ENCODE measurements at regions of chr17 and their contacts with region 1.

Region 1: GRCh38 chr17:50026901-50027630 is 28.8 kb upstream of the ITGA3 start:
- DNase-seq: peak; percentile 93
- H3K4me3 Mint-ChIP-seq: peak overlapping the region; percentile 68
- H3K27ac Mint-ChIP-seq: no peak overlapping the region
- H3K4me1 Mint-ChIP-seq: peaks cover 7% of the 10 kb centered on the region
- H3K27me3 Mint-ChIP-seq: peaks cover 15% of the 10 kb centered on the region

Region 2: GRCh38 chr17:49890181-49890821 is 136.8 kb before region 1 on chr17:
- intact Hi-C with region 1: no loop called
- DNase-seq: no peak
- H3K4me3 Mint-ChIP-seq: no peak overlapping the region
- H3K27ac Mint-ChIP-seq: no peak overlapping the region
- H3K4me1 Mint-ChIP-seq: no peaks in the 10 kb centered on the region
- H3K27me3 Mint-ChIP-seq: peaks cover 59% of the 10 kb centered on the region

Region 3: DNA sequence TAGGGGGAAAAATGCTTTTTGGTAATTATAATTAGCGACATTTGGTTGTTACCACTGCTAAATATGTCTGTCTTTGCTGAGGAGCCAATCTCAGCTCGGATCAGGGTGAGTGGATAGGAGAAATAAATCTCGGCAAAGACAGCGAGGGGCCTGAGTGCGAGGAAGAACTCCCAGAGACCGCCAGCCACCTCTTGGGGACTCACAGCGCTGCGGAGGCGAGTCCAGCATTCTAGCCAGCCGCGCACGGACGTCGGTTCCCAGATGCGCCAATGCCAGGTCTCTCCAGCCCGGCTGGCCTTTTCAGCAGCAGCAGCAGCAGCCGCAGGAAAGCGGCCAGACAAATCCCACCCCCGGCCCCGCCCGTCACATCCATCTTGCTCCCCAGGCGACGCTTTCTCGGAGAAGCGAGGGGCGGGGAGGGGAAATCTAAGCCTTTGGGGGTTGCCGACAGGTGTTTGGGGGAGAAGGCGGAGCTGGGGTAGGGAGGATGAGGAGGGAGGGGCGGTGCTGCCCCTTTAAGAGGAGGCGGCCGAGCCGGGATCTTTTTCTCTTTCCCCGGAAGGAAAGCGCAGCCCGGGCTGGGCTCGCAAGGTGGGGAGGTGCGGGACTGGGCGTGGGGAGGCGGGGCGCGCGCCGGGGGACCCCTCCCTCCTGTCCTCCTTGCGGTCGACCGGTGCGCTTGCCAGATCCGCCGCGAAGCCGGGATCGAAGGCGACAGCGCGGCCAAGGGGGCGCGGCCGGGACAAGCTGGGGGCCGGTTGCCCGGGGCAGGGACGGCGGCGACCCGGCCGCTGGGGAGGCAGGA is 28.6 kb after region 1 on chr17 and contains the start of gene ITGA3:
- intact Hi-C with region 1: loop called (anchors 1 kb)
- DNase-seq: peak; percentile 92
- H3K4me3 Mint-ChIP-seq: peak within 1 kb of the TSS; percentile 96
- H3K27ac Mint-ChIP-seq: peak within 1 kb of the TSS; percentile 89
- H3K4me1 Mint-ChIP-seq: peaks cover 42% of the 10 kb centered on the region
- H3K27me3 Mint-ChIP-seq: peaks cover 3% of the 10 kb centered on the region
- total RNA-seq, gene ITGA3: 14.5 and 15.0 TPM in 2 replicates